A673 (cell line): ENCODE measurements at regions of chr6 and their contacts with region 1.

Region 1: GRCh38 chr6:30556066-30556905 is at the start of gene GNL1:
- DNase-seq: peak; percentile 93
- H3K4me3 ChIP-seq: peak within 1 kb of the TSS; percentile 61
- H3K27ac ChIP-seq: peak within 1 kb of the TSS; percentile 88
- H3K4me1 ChIP-seq: peaks cover 16% of the 10 kb centered on the region
- H3K27me3 ChIP-seq: no peaks in the 10 kb centered on the region
- CTCF ChIP-seq: no peak
- total RNA-seq, gene GNL1: 93.2 and 101 TPM in 2 replicates

Region 2: GRCh38 chr6:30515932-30516753 is 40.1 kb before region 1 on chr6:
- CTCF ChIA-PET with region 1: interaction called, 3 read pairs
- POLR2A ChIA-PET with region 1: interaction called, 11 read pairs
- intact Hi-C with region 1: no loop called
- DNase-seq: peak; percentile 96
- H3K4me3 ChIP-seq: peak overlapping the region; percentile 44
- H3K27ac ChIP-seq: peak overlapping the region; percentile 79
- H3K4me1 ChIP-seq: no peaks in the 10 kb centered on the region
- H3K27me3 ChIP-seq: no peaks in the 10 kb centered on the region
- CTCF ChIP-seq: no peak

Region 3: GRCh38 chr6:30541515-30542403 is 14.5 kb before region 1 on chr6:
- CTCF ChIA-PET with region 1: interaction called, 12 read pairs
- POLR2A ChIA-PET with region 1: no interaction called
- intact Hi-C with region 1: no loop called
- DNase-seq: peak; percentile 85
- H3K4me3 ChIP-seq: peak overlapping the region; percentile 32
- H3K27ac ChIP-seq: no peak overlapping the region
- H3K4me1 ChIP-seq: peaks cover 4% of the 10 kb centered on the region
- H3K27me3 ChIP-seq: no peaks in the 10 kb centered on the region
- CTCF ChIP-seq: peak; percentile 99

Region 4: DNA sequence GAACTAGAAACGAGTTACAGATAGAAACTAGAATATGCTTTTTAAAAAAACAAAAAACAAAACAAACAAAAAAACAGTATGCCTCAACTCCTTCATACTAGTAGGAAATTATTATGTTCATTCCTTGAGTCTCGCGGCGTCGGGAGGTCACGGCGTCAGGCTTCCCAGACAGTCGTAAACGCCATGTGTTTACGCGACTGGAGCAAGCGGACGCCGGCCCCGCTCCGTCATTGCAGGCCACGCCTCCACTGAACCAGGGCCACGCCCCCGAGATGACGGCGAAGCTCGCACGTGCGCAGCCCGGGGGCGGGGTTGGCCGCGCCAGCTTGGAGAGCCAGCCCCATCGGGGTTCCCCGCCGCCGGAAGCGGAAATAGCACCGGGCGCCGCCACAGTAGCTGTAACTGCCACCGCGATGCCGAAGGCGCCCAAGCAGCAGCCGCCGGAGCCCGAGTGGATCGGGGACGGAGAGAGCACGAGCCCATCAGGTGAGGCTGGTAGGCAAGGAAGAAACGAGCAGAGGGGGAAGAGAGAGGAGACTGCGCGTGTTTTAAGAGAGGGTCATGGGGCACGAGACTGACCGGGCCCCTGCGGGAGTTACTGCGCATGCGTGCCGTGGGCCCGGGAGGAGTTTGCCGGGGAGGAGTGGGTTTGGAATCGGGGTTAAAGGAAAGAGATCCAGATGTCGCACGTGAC is 14.9 kb after region 1 on chr6 and contains the start of gene ABCF1:
- CTCF ChIA-PET with region 1: no interaction called
- POLR2A ChIA-PET with region 1: no interaction called
- intact Hi-C with region 1: loop called (anchors 1 kb)
- DNase-seq: peak; percentile 98
- H3K4me3 ChIP-seq: peak within 1 kb of the TSS; percentile 65
- H3K27ac ChIP-seq: peak within 1 kb of the TSS; percentile 88
- H3K4me1 ChIP-seq: peaks cover 32% of the 10 kb centered on the region
- H3K27me3 ChIP-seq: no peaks in the 10 kb centered on the region
- CTCF ChIP-seq: no peak
- total RNA-seq, gene ABCF1: 109 and 119 TPM in 2 replicates

Region 5: DNA sequence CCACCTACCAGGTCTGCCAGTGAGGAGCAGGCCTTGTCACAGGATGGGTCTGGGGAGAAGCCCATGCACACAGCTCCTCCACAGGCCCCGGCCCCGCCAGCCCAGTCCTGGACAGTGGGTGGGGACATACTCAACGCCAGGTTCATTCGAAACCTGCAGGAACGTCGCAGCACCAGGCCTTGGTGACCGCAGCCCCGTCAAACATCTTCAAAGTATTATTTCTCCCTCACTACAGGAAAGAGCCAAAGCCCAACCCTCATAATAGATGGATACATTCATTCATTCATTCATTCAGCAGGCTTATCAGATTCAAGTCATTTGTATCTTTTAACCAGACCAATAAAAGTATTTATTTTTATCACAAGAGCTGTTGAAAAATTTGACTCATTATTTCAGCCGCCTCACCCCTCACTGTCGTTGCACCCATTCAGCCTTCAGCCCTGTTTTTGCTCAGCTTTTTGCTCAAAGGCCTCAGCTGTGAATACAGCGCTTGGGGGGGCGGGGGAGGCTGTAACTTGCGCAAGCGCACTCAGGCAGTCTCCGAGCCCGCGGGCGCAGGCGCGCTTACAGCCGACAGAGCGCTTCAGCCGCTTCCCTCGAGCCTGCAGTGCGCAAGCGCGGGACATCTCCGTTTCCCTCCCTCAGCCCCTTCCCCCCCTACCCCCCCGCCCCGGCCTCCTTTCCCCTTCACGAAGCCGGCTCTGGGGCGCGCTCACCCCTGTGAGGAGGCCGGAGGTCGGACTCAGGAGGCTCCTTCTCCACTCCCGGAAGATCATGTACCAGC is 90.4 kb after region 1 on chr6 and contains the start of gene C6orf136:
- CTCF ChIA-PET with region 1: no interaction called
- POLR2A ChIA-PET with region 1: no interaction called
- intact Hi-C with region 1: no loop called
- DNase-seq: peak; percentile 96
- H3K4me3 ChIP-seq: peak within 1 kb of the TSS; percentile 99
- H3K27ac ChIP-seq: peak within 1 kb of the TSS; percentile 92
- H3K4me1 ChIP-seq: peaks cover 10% of the 10 kb centered on the region
- H3K27me3 ChIP-seq: no peaks in the 10 kb centered on the region
- CTCF ChIP-seq: no peak
- total RNA-seq, gene C6orf136: 25.0 and 35.9 TPM in 2 replicates

Region 6: DNA sequence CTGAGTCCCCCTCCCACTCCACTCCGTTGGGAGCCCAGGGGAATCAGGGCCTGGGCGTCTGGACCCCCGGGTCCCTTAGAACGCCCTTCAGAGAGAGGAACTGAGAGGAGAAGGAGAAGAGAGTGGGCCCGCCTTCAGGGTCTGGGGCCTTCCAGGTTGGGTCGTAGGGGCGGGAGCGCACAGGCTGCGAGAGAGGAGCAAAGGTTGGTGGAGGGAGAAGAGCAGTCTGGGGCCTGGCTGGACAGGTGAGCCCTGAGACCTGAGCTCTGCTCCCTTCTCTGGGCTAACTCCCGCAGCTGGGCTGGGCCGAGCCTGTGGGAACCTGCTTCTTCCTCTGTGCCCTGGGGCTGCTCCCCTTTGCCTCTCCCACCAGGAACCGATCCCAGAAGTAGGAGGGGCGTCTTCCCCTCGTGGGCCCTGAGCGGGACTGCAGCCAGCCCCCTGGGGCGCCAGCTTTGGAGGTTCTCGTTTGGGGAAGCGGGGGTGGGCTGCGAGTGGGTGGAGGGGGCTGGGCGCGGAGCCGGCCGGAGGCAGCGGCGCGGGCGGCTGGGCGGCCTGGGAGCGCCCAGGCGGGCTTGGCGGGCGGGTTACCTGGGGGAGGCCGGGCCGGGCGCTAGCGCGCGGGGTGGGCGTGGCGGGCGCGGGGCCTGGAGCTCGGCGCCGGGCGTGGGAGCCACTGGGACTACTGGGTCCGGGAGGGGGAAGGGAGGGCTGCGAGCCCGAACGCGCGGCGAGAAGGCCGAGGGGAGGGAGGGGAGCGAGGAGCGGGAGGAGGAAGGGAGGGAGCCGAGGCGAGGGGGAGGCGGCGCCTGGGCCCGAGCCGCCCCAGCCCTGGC is 327.6 kb after region 1 on chr6 and contains the start of gene DDR1:
- CTCF ChIA-PET with region 1: no interaction called
- POLR2A ChIA-PET with region 1: no interaction called
- intact Hi-C with region 1: loop called (anchors 10 kb)
- DNase-seq: peak; percentile 83
- H3K4me3 ChIP-seq: peak within 1 kb of the TSS; percentile 72
- H3K27ac ChIP-seq: peak within 1 kb of the TSS; percentile 81
- H3K4me1 ChIP-seq: peaks cover 47% of the 10 kb centered on the region
- H3K27me3 ChIP-seq: no peaks in the 10 kb centered on the region
- CTCF ChIP-seq: no peak
- total RNA-seq, gene DDR1: 48.0 and 57.9 TPM in 2 replicates